Caco-2 (cell line): ENCODE measurements at regions of chr6 and their contacts with region 1.

Region 1: GRCh38 chr6:167962711-167963110 is 34.8 kb upstream of the KIF25 start:
- DNase-seq: no peak
- H3K4me3 ChIP-seq: no peak overlapping the region
- H3K4me3 Mint-ChIP-seq: peak overlapping the region; percentile 30
- H3K27ac Mint-ChIP-seq: peak overlapping the region; percentile 82
- H3K4me1 ChIP-seq: peaks cover 47% of the 10 kb centered on the region
- H3K4me1 Mint-ChIP-seq: peaks cover 54% of the 10 kb centered on the region
- H3K27me3 ChIP-seq: no peaks in the 10 kb centered on the region
- H3K27me3 Mint-ChIP-seq: no peaks in the 10 kb centered on the region
- CTCF ChIP-seq: no peak

Region 2: DNA sequence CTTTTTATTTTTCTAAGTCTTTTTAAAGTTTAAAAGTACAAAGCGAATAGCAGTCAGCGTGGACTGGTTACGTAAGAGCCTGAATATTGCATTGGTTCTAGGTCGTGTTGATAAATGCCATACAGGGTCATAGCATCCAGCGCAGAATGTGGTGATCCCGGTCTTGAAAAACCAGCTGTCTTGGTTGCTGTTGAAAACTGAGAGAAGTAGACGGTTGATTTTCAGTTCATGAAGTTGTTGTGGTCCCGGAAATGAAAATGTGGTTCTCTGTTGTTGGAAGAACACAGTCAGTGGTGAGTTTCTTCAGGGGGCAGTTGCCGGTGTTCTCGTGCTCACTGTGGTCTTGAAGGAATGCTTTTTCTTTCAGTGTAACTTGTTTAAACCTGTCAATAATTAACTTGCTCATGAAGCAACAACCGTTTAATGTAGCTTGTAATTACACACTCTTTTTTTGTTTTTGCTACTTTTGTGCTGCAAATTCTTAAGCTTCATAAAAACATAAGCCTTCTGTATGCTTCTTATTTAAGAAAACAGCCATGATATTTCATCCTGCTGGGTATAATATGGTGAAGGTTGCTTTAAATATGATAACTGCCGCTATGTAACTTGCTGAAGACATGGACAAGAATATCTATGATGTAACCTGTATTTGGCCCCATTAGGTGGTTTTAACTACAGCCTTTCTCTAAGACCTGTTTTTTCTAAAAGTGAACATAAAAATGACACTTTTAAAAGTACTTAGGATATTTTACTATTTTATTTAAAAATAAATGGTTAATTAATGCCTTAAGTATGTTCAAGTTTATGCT is 30.0 kb before region 1 on chr6:
- CTCF ChIA-PET with region 1: no interaction called
- POLR2A ChIA-PET with region 1: interaction called, 4 read pairs
- intact Hi-C with region 1: loop called (anchors 1 kb)
- DNase-seq: peak in 1 of 2 experiments; percentile 70
- H3K4me3 ChIP-seq: peak overlapping the region; percentile 19; the same call in 1 of the 2 replicates
- H3K4me3 Mint-ChIP-seq: peak overlapping the region; percentile 73
- H3K27ac Mint-ChIP-seq: peak overlapping the region; percentile 90
- H3K4me1 ChIP-seq: peaks cover 33% of the 10 kb centered on the region
- H3K4me1 Mint-ChIP-seq: peaks cover 21% of the 10 kb centered on the region
- H3K27me3 ChIP-seq: no peaks in the 10 kb centered on the region
- H3K27me3 Mint-ChIP-seq: no peaks in the 10 kb centered on the region
- CTCF ChIP-seq: no peak